ENCODE measurements at regions of chr20 and their contacts with region 1.

Region 1: GRCh38 chr20:3786665-3787323 is at the start of gene CENPB:
- DNase-seq: peak; percentile 84 to 91
- ATAC-seq: peak; percentile 86 to 87
- H3K4me3 ChIP-seq: peak within 1 kb of the TSS; percentile 86
- H3K27ac ChIP-seq: peak within 1 kb of the TSS; percentile 88 to 96
- H3K4me1 ChIP-seq: peaks cover 43% of the 10 kb centered on the region
- CTCF ChIP-seq: peak; percentile 99
- EP300 ChIP-seq: no peak
- POLR2A ChIP-seq: peak; percentile 47
- RAD21 ChIP-seq: peak; percentile 81 to 99
- polyA plus RNA-seq, gene CENPB: 35.9 and 42.6 TPM in 2 replicates

Region 2: GRCh38 chr20:3679749-3680700 is 106.8 kb before region 1 on chr20:
- CTCF ChIA-PET with region 1: interaction called, 70 read pairs
- POLR2A ChIA-PET with region 1: interaction called, 12 read pairs
- DNase-seq: no peak
- ATAC-seq: no peak
- H3K4me3 ChIP-seq: no peak overlapping the region
- H3K27ac ChIP-seq: peak overlapping the region in 1 of 2 experiments; percentile 31; a peak in 2 of 6 replicates
- H3K4me1 ChIP-seq: peaks cover 25% of the 10 kb centered on the region; the same call in 2 of the 3 replicates
- CTCF ChIP-seq: no peak
- EP300 ChIP-seq: no peak
- POLR2A ChIP-seq: no peak
- RAD21 ChIP-seq: no peak

Region 3: GRCh38 chr20:3811467-3812258 is 24.9 kb after region 1 on chr20:
- CTCF ChIA-PET with region 1: no interaction called
- POLR2A ChIA-PET with region 1: interaction called, 18 read pairs
- DNase-seq: peak; percentile 97 to 100
- ATAC-seq: peak; percentile 54 to 63
- H3K4me3 ChIP-seq: peak overlapping the region; percentile 37
- H3K27ac ChIP-seq: peak overlapping the region; percentile 95 to 99
- H3K4me1 ChIP-seq: peaks cover 65% of the 10 kb centered on the region
- CTCF ChIP-seq: no peak
- EP300 ChIP-seq: peak; percentile 93 to 98
- POLR2A ChIP-seq: peak; percentile 19
- RAD21 ChIP-seq: peak; percentile 23 to 58

Region 4: GRCh38 chr20:3839169-3839727 is 52.5 kb after region 1 on chr20:
- CTCF ChIA-PET with region 1: interaction called, 11 read pairs
- POLR2A ChIA-PET with region 1: no interaction called
- DNase-seq: no peak
- ATAC-seq: no peak
- H3K4me3 ChIP-seq: no peak overlapping the region
- H3K27ac ChIP-seq: no peak overlapping the region
- H3K4me1 ChIP-seq: peaks cover 16% of the 10 kb centered on the region
- CTCF ChIP-seq: no peak
- EP300 ChIP-seq: no peak
- POLR2A ChIP-seq: no peak
- RAD21 ChIP-seq: no peak

Region 5: GRCh38 chr20:3866466-3866916 is 79.7 kb after region 1 on chr20:
- CTCF ChIA-PET with region 1: interaction called, 12 read pairs
- POLR2A ChIA-PET with region 1: no interaction called
- DNase-seq: no peak
- ATAC-seq: peak in 1 of 2 experiments; percentile 14; a peak in 3 of 6 replicates
- H3K4me3 ChIP-seq: no peak overlapping the region
- H3K27ac ChIP-seq: no peak overlapping the region
- H3K4me1 ChIP-seq: 0 out of 3 replicates have a peak, but pooled peaks cover 3% of the 10 kb centered on the region
- CTCF ChIP-seq: no peak
- EP300 ChIP-seq: no peak
- POLR2A ChIP-seq: no peak
- RAD21 ChIP-seq: no peak

Region 6: DNA sequence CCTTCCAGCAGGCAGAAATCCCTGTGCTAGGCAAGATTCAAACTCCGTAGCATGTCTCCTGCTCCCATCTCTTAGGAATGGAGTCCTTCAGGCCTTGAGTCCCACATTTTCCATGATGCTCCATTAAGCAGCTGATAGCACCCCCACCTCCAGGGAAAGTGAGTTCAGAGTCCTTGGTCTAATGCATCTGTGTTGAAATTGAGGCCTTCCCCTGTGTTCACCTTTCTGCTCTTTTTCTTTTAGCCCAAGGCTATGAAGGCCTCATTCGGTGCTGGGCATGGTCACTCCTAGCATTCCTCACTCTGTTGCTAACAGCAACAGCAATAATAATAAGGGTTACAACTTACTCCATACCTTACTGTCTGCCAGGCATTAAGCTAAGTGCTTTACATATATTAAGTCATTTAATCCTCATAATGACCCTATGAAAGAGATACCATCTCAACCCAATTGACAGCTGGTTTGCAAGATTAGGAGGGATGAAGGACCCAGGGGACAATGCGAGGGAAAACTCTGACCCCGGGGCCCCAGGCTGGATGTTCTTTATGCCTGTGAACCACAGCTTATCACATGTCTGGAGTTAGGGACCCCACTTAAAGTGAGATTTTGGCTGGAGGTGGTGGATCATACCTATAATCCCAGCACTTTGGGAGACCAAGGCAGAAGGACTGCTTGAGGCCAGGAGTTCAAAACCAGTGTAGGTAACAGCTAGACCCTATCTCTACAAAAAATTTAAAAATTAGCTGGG is 84.9 kb after region 1 on chr20:
- CTCF ChIA-PET with region 1: interaction called, 5 read pairs
- POLR2A ChIA-PET with region 1: interaction called, 11 read pairs
- DNase-seq: peak; percentile 36 to 47
- ATAC-seq: peak in 1 of 2 experiments; percentile 34; a peak in 2 of 6 replicates
- H3K4me3 ChIP-seq: no peak overlapping the region
- H3K27ac ChIP-seq: no peak overlapping the region
- H3K4me1 ChIP-seq: 0 out of 3 replicates have a peak, but pooled peaks cover 3% of the 10 kb centered on the region
- CTCF ChIP-seq: no peak
- EP300 ChIP-seq: no peak
- POLR2A ChIP-seq: no peak
- RAD21 ChIP-seq: no peak

Region 7: DNA sequence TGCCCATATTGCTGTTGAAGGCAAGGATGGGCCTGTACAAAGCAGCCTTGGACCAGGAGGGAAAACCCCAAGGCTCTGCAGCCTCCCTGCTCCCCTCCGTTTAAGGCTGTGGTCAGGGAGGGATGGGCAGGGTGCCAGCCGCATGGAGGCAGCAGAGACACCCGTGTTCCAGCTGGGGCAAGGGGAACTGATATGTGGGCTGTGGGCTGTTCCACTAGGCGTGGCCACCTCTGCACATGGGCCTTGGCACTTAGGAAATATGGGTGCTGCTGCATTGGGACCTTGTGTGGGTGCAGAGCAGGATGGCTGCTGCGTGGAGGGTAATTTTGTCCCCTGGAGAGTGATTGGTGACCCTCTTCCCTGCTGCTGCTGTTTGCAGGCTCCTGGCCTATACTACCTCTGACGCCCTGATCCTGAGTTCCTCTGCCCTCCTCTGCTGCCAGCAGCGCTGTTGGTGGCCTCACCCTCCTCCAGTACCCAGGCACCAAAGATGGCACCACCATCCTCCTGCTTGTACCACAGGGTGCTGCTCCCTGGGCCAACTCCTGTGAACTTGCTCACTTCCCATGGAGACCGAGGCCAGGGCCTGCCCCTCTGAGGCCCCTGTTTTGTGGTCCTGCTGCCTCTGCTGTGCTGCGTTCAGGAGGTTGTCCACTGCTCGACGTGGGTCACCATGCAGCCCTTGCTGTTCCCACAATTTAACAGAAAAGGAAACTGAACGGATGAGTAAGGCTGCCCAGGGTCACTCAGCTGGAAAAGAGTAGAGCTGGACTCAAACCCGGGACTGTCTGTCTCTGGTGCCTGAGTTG is 137.7 kb after region 1 on chr20:
- CTCF ChIA-PET with region 1: no interaction called
- POLR2A ChIA-PET with region 1: no interaction called
- DNase-seq: no peak
- ATAC-seq: 0 out of 6 replicates have a peak, but pooled peaks of 1 of the 2 experiments have one; percentile 30
- H3K4me3 ChIP-seq: no peak overlapping the region
- H3K27ac ChIP-seq: 0 out of 6 replicates have a peak overlapping the region, but pooled peaks of 1 of the 2 experiments have one; percentile 49
- H3K4me1 ChIP-seq: peaks cover 14% of the 10 kb centered on the region; the same call in 2 of the 3 replicates
- CTCF ChIP-seq: no peak
- EP300 ChIP-seq: no peak
- POLR2A ChIP-seq: no peak
- RAD21 ChIP-seq: no peak